ENCODE measurements at regions of chr9 and their contacts with region 1.

Region 1: DNA sequence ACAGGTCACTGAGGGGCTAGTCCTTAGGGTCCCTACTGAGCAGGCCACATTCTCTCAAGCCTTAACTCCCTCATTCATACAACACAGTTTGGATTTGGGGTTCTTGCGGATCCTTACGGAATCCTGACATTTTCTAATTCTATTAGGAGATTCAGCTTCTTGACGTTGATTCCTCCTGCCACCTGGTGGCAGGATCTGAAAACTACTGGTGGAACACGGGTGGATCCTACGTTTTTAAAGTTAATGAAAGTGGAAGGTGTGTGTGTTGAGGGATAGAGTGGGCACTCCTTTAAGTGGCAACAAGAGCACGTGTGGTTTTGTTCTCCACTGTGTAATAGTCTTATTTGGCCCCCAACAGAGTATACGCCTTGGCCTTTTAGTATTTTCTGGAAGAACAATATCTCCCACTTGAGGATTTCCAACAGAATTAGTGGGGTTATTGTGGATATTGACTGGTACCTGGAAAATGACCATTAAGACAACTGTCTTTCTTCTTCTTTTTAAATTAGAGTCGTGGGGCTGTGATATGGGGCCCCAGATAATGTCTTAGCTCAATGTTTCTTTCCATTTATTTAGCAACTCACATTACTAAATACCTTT is 25.2 kb downstream of the SLC28A3 start:
- DNase-seq: peak; percentile 71
- ATAC-seq: peak; percentile 83
- H3K4me3 ChIP-seq: no peak overlapping the region
- H3K27ac ChIP-seq: no peak overlapping the region
- H3K4me1 ChIP-seq: peaks cover 3% of the 10 kb centered on the region; the same call in 1 of the 2 replicates
- H3K27me3 ChIP-seq: no peaks in the 10 kb centered on the region
- CTCF ChIP-seq: peak; percentile 80
- POLR2A ChIP-seq: no peak
- RAD21 ChIP-seq: peak; percentile 84

Region 2: DNA sequence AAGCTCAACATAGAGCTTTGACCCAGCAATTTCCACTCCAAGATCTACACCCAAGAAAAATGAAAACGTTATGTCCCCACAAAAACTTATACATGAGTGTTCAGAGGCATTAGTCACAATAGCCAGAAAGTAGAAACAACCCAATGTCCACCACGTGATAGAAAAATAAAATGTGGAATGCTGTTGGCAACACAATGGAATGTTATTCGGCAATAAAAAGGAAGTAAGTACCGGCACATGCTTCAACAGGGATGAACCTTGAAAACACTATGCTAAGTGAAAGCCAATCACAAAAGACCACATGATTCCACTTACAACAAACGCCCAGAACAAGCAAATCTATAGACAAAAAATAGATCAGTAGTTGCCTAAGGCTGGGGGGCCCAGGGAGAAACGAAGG is 613.6 kb before region 1 on chr9:
- CTCF ChIA-PET with region 1: no interaction called
- POLR2A ChIA-PET with region 1: no interaction called
- dilution Hi-C with region 1: no loop called
- in situ Hi-C with region 1: no loop called
- intact Hi-C with region 1: no loop called
- DNase-seq: peak; percentile 54
- ATAC-seq: peak; percentile 43
- H3K4me3 ChIP-seq: no peak overlapping the region
- H3K27ac ChIP-seq: no peak overlapping the region
- H3K4me1 ChIP-seq: no peaks in the 10 kb centered on the region; the same call in 1 of the 2 replicates
- H3K27me3 ChIP-seq: no peaks in the 10 kb centered on the region
- CTCF ChIP-seq: no peak
- POLR2A ChIP-seq: no peak
- RAD21 ChIP-seq: no peak

Region 3: DNA sequence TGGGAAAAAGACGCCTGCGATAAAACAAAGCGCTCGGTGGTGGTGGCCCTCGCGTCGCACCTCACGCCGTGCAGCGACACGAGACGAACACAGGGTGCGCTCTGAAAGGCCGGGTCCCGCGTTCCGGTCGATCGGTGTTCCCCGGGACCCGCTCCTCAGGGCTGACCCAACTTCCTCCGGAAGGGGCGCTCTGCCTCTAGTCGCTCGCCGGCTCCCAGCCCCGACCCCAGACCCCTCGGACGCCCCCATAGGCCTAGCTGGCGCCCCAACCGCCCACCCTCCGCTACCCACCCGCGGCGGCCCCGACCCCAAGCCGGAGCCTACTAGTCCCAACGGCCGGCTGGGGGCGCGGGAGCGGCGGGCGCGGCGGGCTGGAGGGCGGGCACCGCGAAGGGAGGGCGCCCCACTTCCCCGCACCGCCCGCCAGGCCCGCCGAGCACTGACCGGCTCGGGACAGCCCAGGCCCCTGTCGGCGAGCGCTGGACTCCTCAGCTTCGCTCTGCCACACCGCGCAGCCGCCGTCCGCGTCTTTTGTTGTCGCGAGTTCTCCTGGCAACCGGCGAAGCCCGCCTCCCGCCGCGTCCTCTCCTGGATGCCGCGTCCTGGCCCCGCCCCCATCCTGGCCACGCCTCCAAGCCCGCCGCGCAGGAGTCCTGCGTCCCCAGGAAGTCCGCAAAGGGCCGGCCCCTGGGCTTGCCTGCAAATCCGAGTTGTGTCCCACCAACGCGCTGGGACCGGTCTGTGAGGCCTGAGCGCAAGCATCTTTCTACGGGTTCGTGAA is 394.3 kb before region 1 on chr9 and contains the start of gene KIF27:
- CTCF ChIA-PET with region 1: no interaction called
- POLR2A ChIA-PET with region 1: no interaction called
- dilution Hi-C with region 1: no loop called
- in situ Hi-C with region 1: no loop called
- intact Hi-C with region 1: loop called (anchors 1 kb)
- DNase-seq: peak; percentile 96
- ATAC-seq: peak; percentile 97
- H3K4me3 ChIP-seq: peak within 1 kb of the TSS; percentile 55
- H3K27ac ChIP-seq: peak within 1 kb of the TSS; percentile 71
- H3K4me1 ChIP-seq: peaks cover 1% of the 10 kb centered on the region; the same call in 1 of the 2 replicates
- H3K27me3 ChIP-seq: no peaks in the 10 kb centered on the region
- CTCF ChIP-seq: peak; percentile 42
- POLR2A ChIP-seq: peak; percentile 83
- RAD21 ChIP-seq: no peak
- total RNA-seq, gene KIF27: 1.6 and 2.2 TPM in 2 replicates

Region 4: GRCh38 chr9:83937911-83938323 is 377.5 kb before region 1 on chr9:
- CTCF ChIA-PET with region 1: interaction called, 3 read pairs
- POLR2A ChIA-PET with region 1: no interaction called
- dilution Hi-C with region 1: no loop called
- in situ Hi-C with region 1: loop called (anchors 5 kb)
- intact Hi-C with region 1: loop called (anchors 1 kb)
- DNase-seq: peak; percentile 62
- ATAC-seq: peak; percentile 71
- H3K4me3 ChIP-seq: no peak overlapping the region
- H3K27ac ChIP-seq: no peak overlapping the region
- H3K4me1 ChIP-seq: peaks cover 5% of the 10 kb centered on the region
- H3K27me3 ChIP-seq: no peaks in the 10 kb centered on the region
- CTCF ChIP-seq: peak; percentile 68
- POLR2A ChIP-seq: no peak
- RAD21 ChIP-seq: peak; percentile 88

Region 5: DNA sequence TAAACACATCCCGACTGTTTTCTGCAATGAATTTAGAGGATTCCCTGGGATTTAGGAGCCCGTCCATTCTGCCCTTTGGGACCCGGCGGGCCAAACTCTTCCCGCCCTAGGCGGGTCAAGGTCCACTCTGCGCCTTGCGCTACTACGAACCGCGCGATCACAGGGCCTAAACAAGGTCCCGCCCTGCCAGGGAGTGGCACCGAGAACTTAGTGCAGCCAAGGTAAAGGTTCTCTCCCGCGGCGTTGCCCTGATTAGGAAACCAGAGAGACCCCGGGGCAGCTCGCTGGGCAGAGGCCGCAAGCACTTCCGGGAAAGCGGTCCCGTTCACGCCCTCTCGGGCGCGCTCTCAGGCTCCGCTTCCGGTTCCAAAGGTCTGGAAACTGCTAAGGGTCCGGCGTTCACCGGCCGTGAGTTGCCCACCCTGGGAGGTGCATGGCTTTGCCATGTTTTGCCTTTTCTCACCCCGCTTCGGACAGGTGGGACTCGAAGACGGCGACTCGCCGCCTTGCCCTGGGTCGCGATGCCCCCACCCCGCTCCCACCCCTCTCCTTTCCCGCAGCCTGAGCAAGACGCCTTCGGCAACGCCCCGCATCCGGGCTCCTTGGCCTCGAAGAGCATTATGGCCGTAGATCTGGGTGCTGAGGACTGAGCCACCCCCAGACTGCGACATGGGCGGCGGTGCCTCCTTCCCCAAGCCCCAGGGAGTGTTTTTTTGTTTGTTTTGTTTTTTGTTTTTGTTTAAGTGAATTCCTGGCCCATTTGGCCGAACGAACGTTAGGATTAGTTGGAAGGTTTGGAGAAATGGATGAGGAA is 358.7 kb before region 1 on chr9:
- CTCF ChIA-PET with region 1: no interaction called
- POLR2A ChIA-PET with region 1: no interaction called
- dilution Hi-C with region 1: no loop called
- in situ Hi-C with region 1: no loop called
- intact Hi-C with region 1: loop called (anchors 5 kb)
- DNase-seq: no peak
- ATAC-seq: peak; percentile 86
- H3K4me3 ChIP-seq: peak overlapping the region; percentile 58
- H3K27ac ChIP-seq: peak overlapping the region; percentile 66
- H3K4me1 ChIP-seq: peaks cover 5% of the 10 kb centered on the region
- H3K27me3 ChIP-seq: no peaks in the 10 kb centered on the region
- CTCF ChIP-seq: no peak
- POLR2A ChIP-seq: no peak
- RAD21 ChIP-seq: no peak

Region 6: DNA sequence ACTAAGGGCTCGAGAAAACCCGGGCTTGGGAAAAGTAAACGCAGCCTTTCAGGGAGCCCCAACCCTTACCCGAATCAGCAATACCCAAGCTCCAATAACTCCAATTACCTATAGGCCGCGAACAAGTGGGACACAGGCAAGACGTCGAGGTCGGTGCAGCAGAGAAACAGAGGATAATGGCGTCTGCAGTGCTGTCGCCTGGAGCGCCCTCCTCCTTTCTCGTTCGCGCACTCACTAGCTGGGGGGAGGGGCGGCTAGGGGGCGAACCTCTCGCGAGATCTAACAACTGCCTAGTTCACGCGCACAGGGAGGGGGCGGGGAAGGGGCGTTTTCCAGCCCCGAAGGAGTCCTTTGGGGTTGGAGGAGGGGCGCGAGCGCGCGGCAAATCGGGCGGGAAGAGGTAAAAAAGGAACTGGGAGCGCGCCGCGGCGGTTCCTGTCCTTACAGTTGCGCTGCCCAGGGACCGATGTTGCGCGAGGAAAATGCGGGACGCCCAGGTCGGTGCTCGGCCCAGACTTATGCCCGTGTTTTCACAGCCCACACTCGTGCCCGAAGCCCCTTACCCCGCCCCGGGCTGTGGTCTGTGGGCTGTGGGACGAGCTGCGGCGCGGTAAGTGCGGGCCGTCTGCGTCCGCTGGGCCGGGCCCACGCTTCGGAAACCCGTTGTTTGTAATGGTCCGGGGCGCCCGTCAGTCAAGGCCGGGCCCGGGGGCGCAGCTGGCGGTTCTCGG is 334.8 kb before region 1 on chr9 and contains the start of gene RMI1:
- CTCF ChIA-PET with region 1: interaction called, 4 read pairs
- POLR2A ChIA-PET with region 1: no interaction called
- dilution Hi-C with region 1: no loop called
- in situ Hi-C with region 1: no loop called
- intact Hi-C with region 1: loop called (anchors 2 kb)
- DNase-seq: peak; percentile 96
- ATAC-seq: peak; percentile 88
- H3K4me3 ChIP-seq: peak within 1 kb of the TSS; percentile 88
- H3K27ac ChIP-seq: peak within 1 kb of the TSS; percentile 98
- H3K4me1 ChIP-seq: no peaks in the 10 kb centered on the region
- H3K27me3 ChIP-seq: no peaks in the 10 kb centered on the region
- CTCF ChIP-seq: 0 out of 2 replicates have a peak, but pooled peaks have one; percentile 13
- POLR2A ChIP-seq: peak; percentile 95
- RAD21 ChIP-seq: no peak
- total RNA-seq, gene RMI1: 6.8 and 12.8 TPM in 2 replicates

Region 7: GRCh38 chr9:84170521-84171141 is 144.7 kb before region 1 on chr9:
- CTCF ChIA-PET with region 1: no interaction called
- POLR2A ChIA-PET with region 1: no interaction called
- dilution Hi-C with region 1: no loop called
- in situ Hi-C with region 1: no loop called
- intact Hi-C with region 1: loop called (anchors 2 kb)
- DNase-seq: peak; percentile 98
- ATAC-seq: peak; percentile 96
- H3K4me3 ChIP-seq: no peak overlapping the region
- H3K27ac ChIP-seq: peak overlapping the region; percentile 81
- H3K4me1 ChIP-seq: peaks cover 17% of the 10 kb centered on the region
- H3K27me3 ChIP-seq: no peaks in the 10 kb centered on the region
- CTCF ChIP-seq: 0 out of 2 replicates have a peak, but pooled peaks have one; percentile 13
- POLR2A ChIP-seq: no peak
- RAD21 ChIP-seq: peak; percentile 23; the same call in 1 of the 2 replicates

Region 8: GRCh38 chr9:84261082-84261746 is 54.2 kb before region 1 on chr9:
- CTCF ChIA-PET with region 1: interaction called, 7 read pairs
- POLR2A ChIA-PET with region 1: no interaction called
- dilution Hi-C with region 1: no loop called
- in situ Hi-C with region 1: loop called (anchors 5 kb)
- intact Hi-C with region 1: loop called (anchors 1 kb)
- DNase-seq: peak; percentile 75
- ATAC-seq: peak; percentile 99
- H3K4me3 ChIP-seq: peak overlapping the region; percentile 17; the same call in 1 of the 2 replicates
- H3K27ac ChIP-seq: no peak overlapping the region
- H3K4me1 ChIP-seq: no peaks in the 10 kb centered on the region
- H3K27me3 ChIP-seq: no peaks in the 10 kb centered on the region
- CTCF ChIP-seq: peak; percentile 92
- POLR2A ChIP-seq: no peak
- RAD21 ChIP-seq: peak; percentile 98